CD4-positive, alpha-beta memory T cell (primary cell): ENCODE measurements at regions of chr17 and their contacts with region 1.

Region 1: DNA sequence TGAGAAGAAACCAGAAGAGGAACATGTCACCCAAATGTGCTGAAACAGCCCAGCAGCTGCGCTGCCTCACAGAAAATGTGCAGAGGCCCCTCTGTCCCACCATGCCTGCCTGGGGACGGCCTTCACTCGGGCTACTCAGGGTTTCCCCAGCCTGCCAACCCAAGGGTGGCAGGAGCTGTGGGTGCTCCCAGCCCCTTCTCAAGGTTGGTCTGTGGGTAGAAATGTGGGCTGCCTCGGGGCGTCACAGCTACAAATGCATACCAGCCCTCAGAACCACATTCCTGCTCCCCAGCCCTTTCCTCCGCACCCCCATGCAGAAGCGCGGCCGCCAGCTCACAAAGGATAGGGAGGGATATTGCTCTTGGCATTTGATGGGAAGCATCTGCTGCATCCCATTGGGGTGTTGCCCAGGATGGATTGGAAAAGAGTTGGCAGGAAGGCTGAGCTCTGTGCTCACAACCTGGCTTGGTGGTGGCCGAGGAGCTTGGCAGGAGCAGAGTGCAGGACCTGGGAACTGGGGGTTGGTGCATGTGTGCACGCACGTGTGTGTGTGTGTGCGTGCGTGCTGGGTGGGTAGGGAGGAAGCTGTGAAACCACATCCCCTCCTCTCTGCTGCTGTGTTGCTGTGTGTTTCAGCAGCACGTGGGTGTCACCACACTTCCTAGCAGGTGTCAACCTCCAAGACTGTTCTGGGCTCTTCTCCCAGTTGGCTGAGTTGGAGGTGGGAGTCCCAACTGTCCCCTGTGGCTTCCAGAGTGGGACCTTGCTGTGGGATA is 304.4 kb downstream of the SEC14L1 start:
- DNase-seq: peak; percentile 92 to 95 (median 94)
- H3K4me3 ChIP-seq: peak overlapping the region; percentile 54 to 64
- H3K4me3 Mint-ChIP-seq: peak overlapping the region; percentile 73 to 89 (median 86)
- H3K27ac ChIP-seq: peak overlapping the region; percentile 90
- H3K27ac Mint-ChIP-seq: peak overlapping the region; percentile 90 to 99 (median 99)
- H3K4me1 ChIP-seq: peaks cover 100% of the 10 kb centered on the region
- H3K4me1 Mint-ChIP-seq: peaks cover 65 to 99% (median 89%) of the 10 kb centered on the region in 4 donors
- H3K27me3 ChIP-seq: no peaks in the 10 kb centered on the region
- H3K27me3 Mint-ChIP-seq: no peaks in the 10 kb centered on the region

Region 2: DNA sequence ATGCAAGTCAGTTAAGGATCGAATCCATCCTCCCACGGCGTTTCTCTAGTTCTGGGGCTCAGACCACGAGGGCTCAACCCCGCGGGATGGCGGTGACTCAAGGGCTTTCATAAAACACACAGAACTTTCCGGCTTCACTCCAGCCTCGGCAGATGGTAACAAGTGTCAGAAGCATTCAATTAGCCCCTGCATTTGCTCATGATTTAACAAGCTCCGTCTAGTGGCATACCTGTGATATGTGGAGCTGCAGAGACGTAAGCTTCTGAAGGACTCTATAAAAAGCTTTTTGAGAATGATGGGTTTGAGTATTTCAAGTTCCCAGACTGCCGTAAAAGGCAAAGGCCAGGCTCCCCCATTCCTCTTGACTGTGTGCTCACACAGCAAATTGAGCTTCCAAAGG is 395.7 kb before region 1 on chr17:
- CTCF ChIA-PET with region 1: no interaction called
- POLR2A ChIA-PET with region 1: no interaction called
- intact Hi-C with region 1: no loop called
- DNase-seq: no peak
- H3K4me3 ChIP-seq: no peak overlapping the region
- H3K4me3 Mint-ChIP-seq: no peak overlapping the region
- H3K27ac ChIP-seq: no peak overlapping the region
- H3K27ac Mint-ChIP-seq: no peak overlapping the region
- H3K4me1 ChIP-seq: no peaks in the 10 kb centered on the region
- H3K4me1 Mint-ChIP-seq: no peaks in the 10 kb centered on the region
- H3K27me3 ChIP-seq: no peaks in the 10 kb centered on the region
- H3K27me3 Mint-ChIP-seq: peaks cover 2 to 9% of the 10 kb centered on the region in 2 donors

Region 3: DNA sequence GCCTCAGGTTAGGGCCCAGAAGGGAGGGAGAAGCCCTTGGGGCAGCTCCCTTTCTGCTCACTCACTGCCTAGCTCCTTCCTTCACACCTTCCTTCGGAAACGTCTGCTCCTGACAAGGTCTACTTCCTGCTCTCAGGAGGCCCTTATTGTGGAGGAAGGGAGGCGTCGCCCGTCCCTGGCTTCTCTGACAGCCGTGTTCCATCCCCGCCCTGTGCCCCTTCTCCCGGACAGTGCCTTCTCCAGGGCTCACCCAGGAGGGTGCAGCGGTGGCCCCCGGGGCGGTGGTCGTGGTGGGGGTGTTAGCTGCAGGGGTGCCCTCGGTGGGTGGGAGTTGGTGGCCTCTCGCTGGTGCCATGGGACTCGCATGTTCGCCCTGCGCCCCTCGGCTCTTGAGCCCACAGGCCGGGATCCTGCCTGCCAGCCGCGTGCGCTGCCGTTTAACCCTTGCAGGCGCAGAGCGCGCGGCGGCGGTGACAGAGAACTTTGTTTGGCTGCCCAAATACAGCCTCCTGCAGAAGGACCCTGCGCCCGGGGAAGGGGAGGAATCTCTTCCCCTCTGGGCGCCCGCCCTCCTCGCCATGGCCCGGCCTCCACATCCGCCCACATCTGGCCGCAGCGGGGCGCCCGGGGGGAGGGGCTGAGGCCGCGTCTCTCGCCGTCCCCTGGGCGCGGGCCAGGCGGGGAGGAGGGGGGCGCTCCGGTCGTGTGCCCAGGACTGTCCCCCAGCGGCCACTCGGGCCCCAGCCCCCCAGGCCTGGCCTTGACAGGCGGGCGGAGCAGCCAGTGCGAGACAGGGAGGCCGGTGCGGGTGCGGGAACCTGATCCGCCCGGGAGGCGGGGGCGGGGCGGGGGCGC is 72.5 kb before region 1 on chr17:
- CTCF ChIA-PET with region 1: interaction called, 9 read pairs
- POLR2A ChIA-PET with region 1: interaction called, 6,031 read pairs
- intact Hi-C with region 1: loop called (anchors 5 kb)
- DNase-seq: peak; percentile 61 to 74 (median 68)
- H3K4me3 ChIP-seq: peak overlapping the region; percentile 52 to 95
- H3K4me3 Mint-ChIP-seq: peak overlapping the region; percentile 82 to 100 (median 87)
- H3K27ac ChIP-seq: peak overlapping the region; percentile 68
- H3K27ac Mint-ChIP-seq: peak overlapping the region; percentile 81 to 93 (median 90)
- H3K4me1 ChIP-seq: peaks cover 66% of the 10 kb centered on the region
- H3K4me1 Mint-ChIP-seq: peaks cover 43 to 84% (median 55%) of the 10 kb centered on the region in 4 donors
- H3K27me3 ChIP-seq: no peaks in the 10 kb centered on the region
- H3K27me3 Mint-ChIP-seq: no peaks in the 10 kb centered on the region

Region 4: DNA sequence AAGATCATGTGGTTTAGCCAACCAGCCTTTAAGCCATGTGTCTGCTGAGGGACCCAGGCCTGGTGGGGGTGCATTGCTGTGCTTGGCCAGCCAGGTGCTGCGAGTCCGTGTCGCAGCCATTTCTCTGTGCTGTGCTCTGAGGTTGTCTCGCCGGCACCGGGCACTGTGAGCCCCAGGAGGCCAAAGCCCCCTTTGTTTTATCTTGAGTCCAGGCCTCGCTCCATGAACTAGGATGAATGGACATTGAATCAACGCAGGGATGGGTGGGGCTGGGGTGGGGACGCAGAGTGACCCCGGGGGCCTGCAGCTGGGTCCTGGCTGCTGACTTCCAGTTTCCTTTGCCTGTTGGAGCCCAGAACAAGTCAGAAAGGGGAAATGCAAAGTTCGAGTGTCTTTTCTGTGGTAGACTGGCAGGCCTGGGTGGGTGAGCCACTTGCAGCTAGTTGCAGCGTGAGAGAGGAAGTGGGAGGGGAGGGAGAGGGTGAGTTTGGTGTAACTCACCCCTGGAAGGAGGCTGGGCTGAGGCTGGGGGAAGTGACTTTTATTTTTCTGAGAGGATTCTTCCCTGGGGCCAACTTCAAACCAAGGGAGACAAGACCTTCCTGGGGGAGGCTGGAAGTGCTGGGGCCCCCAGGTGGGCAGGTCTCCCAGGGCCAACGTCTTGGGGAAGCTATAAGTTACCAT is 20.3 kb after region 1 on chr17:
- CTCF ChIA-PET with region 1: interaction called, 7 read pairs
- POLR2A ChIA-PET with region 1: interaction called, 6,031 read pairs
- intact Hi-C with region 1: loop called (anchors 1 kb)
- DNase-seq: peak; percentile 82 to 94 (median 84)
- H3K4me3 ChIP-seq: peak overlapping the region; percentile 6 to 47
- H3K4me3 Mint-ChIP-seq: peak overlapping the region; percentile 80 to 90 (median 84)
- H3K27ac ChIP-seq: peak overlapping the region; percentile 50
- H3K27ac Mint-ChIP-seq: peak overlapping the region; percentile 83 to 97 (median 85)
- H3K4me1 ChIP-seq: peaks cover 99% of the 10 kb centered on the region
- H3K4me1 Mint-ChIP-seq: peaks cover 60 to 95% (median 79%) of the 10 kb centered on the region in 4 donors
- H3K27me3 ChIP-seq: no peaks in the 10 kb centered on the region
- H3K27me3 Mint-ChIP-seq: no peaks in the 10 kb centered on the region

Region 5: GRCh38 chr17:77476931-77477877 is 32.0 kb after region 1 on chr17:
- CTCF ChIA-PET with region 1: interaction called, 10 read pairs
- POLR2A ChIA-PET with region 1: interaction called, 126 read pairs
- intact Hi-C with region 1: no loop called
- DNase-seq: peak in 1 of 5 donors; percentile 43
- H3K4me3 ChIP-seq: no peak overlapping the region
- H3K4me3 Mint-ChIP-seq: peak overlapping the region in 6 of 8 donors; percentile 33 to 75 (median 55)
- H3K27ac ChIP-seq: peak overlapping the region; percentile 30
- H3K27ac Mint-ChIP-seq: peak overlapping the region; percentile 74 to 94 (median 87)
- H3K4me1 ChIP-seq: peaks cover 99% of the 10 kb centered on the region
- H3K4me1 Mint-ChIP-seq: peaks cover 57 to 83% (median 69%) of the 10 kb centered on the region in 4 donors
- H3K27me3 ChIP-seq: no peaks in the 10 kb centered on the region
- H3K27me3 Mint-ChIP-seq: no peaks in the 10 kb centered on the region